ENCODE measurements at regions of chr3 and their contacts with region 1.

Region 1: GRCh38 chr3:129183569-129184395 is at the start of gene CNBP:
- DNase-seq: peak; percentile 95 to 98 (median 97)
- ATAC-seq: peak; percentile 99
- H3K4me3 ChIP-seq: peak within 1 kb of the TSS; percentile 80
- H3K27ac ChIP-seq: peak within 1 kb of the TSS; percentile 96
- H3K4me1 ChIP-seq: peaks cover 2% of the 10 kb centered on the region
- H3K27me3 ChIP-seq: no peaks in the 10 kb centered on the region
- total RNA-seq, gene CNBP: 368 to 537 (median 429) TPM

Region 2: GRCh38 chr3:129026728-129027543 is 156.8 kb before region 1 on chr3:
- intact Hi-C with region 1: no loop called
- DNase-seq: peak; percentile 93 to 97 (median 96)
- ATAC-seq: peak; percentile 97 to 98
- H3K4me3 ChIP-seq: peak overlapping the region; percentile 45
- H3K27ac ChIP-seq: peak overlapping the region; percentile 14
- H3K4me1 ChIP-seq: peaks cover 2% of the 10 kb centered on the region
- H3K27me3 ChIP-seq: no peaks in the 10 kb centered on the region

Region 3: GRCh38 chr3:129224984-129225393 is 41.2 kb after region 1 on chr3:
- intact Hi-C with region 1: loop called in 3 of 4 experiments (anchors 5 kb)
- DNase-seq: peak; percentile 90 to 95 (median 93)
- ATAC-seq: peak; percentile 95 to 97
- H3K4me3 ChIP-seq: no peak overlapping the region
- H3K27ac ChIP-seq: peak overlapping the region; percentile 73
- H3K4me1 ChIP-seq: peaks cover 12% of the 10 kb centered on the region
- H3K27me3 ChIP-seq: no peaks in the 10 kb centered on the region

Region 4: GRCh38 chr3:129238945-129239706 is 55.3 kb after region 1 on chr3:
- intact Hi-C with region 1: no loop called
- DNase-seq: peak in 1 of 3 donors; percentile 42
- ATAC-seq: peak; percentile 58 to 79
- H3K4me3 ChIP-seq: no peak overlapping the region
- H3K27ac ChIP-seq: no peak overlapping the region
- H3K4me1 ChIP-seq: peaks cover 2% of the 10 kb centered on the region
- H3K27me3 ChIP-seq: no peaks in the 10 kb centered on the region

Region 5: GRCh38 chr3:129336093-129336709 is 152.4 kb after region 1 on chr3:
- intact Hi-C with region 1: no loop called
- DNase-seq: no peak
- ATAC-seq: peak; percentile 18 to 47
- H3K4me3 ChIP-seq: no peak overlapping the region
- H3K27ac ChIP-seq: no peak overlapping the region
- H3K4me1 ChIP-seq: no peaks in the 10 kb centered on the region
- H3K27me3 ChIP-seq: no peaks in the 10 kb centered on the region

Measured in right cardiac atrium (tissue), 5 donors.